MCF 10A (cell line): ENCODE measurements at regions of chr1 and their contacts with region 1.

Region 1: GRCh38 chr1:51235673-51236530 is at the start of gene RNF11:
- DNase-seq: peak; percentile 85
- H3K4me3 Mint-ChIP-seq: peak within 1 kb of the TSS; percentile 80
- H3K27ac Mint-ChIP-seq: peak within 1 kb of the TSS; percentile 70
- H3K4me1 Mint-ChIP-seq: peaks cover 35% of the 10 kb centered on the region
- H3K27me3 Mint-ChIP-seq: no peaks in the 10 kb centered on the region
- CTCF ChIP-seq: no peak
- total RNA-seq, gene RNF11: 73.1 and 86.0 TPM in 2 replicates

Region 2: GRCh38 chr1:50968158-50968820 is 267.6 kb before region 1 on chr1:
- CTCF ChIA-PET with region 1: no interaction called
- POLR2A ChIA-PET with region 1: interaction called, 26 read pairs
- intact Hi-C with region 1: no loop called
- DNase-seq: peak; percentile 91
- H3K4me3 Mint-ChIP-seq: peak overlapping the region; percentile 86
- H3K27ac Mint-ChIP-seq: peak overlapping the region; percentile 95
- H3K4me1 Mint-ChIP-seq: peaks cover 8% of the 10 kb centered on the region
- H3K27me3 Mint-ChIP-seq: no peaks in the 10 kb centered on the region
- CTCF ChIP-seq: peak; percentile 42

Region 3: DNA sequence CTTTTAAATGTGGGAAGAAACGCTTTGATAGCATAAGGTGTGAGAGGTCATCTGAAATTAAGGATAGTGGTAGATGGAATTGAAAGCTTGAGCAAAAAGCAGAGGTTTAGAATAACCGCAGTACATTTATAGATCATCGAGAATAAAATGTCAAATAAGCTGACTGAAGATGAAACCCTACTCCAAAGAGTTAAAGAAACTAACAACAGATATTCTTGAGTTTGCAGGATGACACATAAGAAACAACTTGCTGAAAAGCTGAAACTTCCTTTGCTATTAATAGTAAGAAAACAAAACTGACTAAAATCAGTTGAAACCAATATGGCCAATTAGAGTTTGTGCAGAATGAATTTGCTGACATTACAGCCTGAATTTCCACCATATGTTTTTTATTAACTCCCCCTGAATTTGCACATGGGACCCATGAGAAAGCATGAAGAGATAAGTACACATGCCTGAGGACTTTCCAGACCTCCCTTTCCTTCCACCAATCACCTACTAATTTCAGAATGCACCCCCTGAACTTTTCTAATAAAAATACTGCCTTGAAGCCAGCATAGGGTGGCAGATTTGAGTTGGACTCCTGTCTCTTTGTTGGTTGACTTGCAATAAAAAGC is 135.5 kb before region 1 on chr1:
- CTCF ChIA-PET with region 1: no interaction called
- POLR2A ChIA-PET with region 1: no interaction called
- intact Hi-C with region 1: no loop called
- DNase-seq: no peak
- H3K4me3 Mint-ChIP-seq: no peak overlapping the region
- H3K27ac Mint-ChIP-seq: no peak overlapping the region
- H3K4me1 Mint-ChIP-seq: no peaks in the 10 kb centered on the region
- H3K27me3 Mint-ChIP-seq: no peaks in the 10 kb centered on the region
- CTCF ChIP-seq: no peak

Region 4: GRCh38 chr1:51131185-51131584 is 104.7 kb before region 1 on chr1:
- CTCF ChIA-PET with region 1: no interaction called
- POLR2A ChIA-PET with region 1: no interaction called
- intact Hi-C with region 1: no loop called
- DNase-seq: no peak
- H3K4me3 Mint-ChIP-seq: no peak overlapping the region
- H3K27ac Mint-ChIP-seq: no peak overlapping the region
- H3K4me1 Mint-ChIP-seq: no peaks in the 10 kb centered on the region
- H3K27me3 Mint-ChIP-seq: no peaks in the 10 kb centered on the region
- CTCF ChIP-seq: no peak

Region 5: GRCh38 chr1:51214615-51215131 is 21.2 kb before region 1 on chr1:
- CTCF ChIA-PET with region 1: interaction called, 3 read pairs
- POLR2A ChIA-PET with region 1: interaction called, 12 read pairs
- intact Hi-C with region 1: no loop called
- DNase-seq: peak; percentile 35
- H3K4me3 Mint-ChIP-seq: no peak overlapping the region
- H3K27ac Mint-ChIP-seq: no peak overlapping the region
- H3K4me1 Mint-ChIP-seq: no peaks in the 10 kb centered on the region
- H3K27me3 Mint-ChIP-seq: no peaks in the 10 kb centered on the region
- CTCF ChIP-seq: no peak

Region 6: GRCh38 chr1:51247022-51247421 is 11.1 kb after region 1 on chr1:
- CTCF ChIA-PET with region 1: interaction called, 3 read pairs
- POLR2A ChIA-PET with region 1: interaction called, 33 read pairs
- intact Hi-C with region 1: no loop called
- DNase-seq: no peak
- H3K4me3 Mint-ChIP-seq: no peak overlapping the region
- H3K27ac Mint-ChIP-seq: no peak overlapping the region
- H3K4me1 Mint-ChIP-seq: peaks cover 32% of the 10 kb centered on the region
- H3K27me3 Mint-ChIP-seq: no peaks in the 10 kb centered on the region
- CTCF ChIP-seq: no peak

Region 7: GRCh38 chr1:51264451-51264850 is 28.5 kb after region 1 on chr1:
- CTCF ChIA-PET with region 1: no interaction called
- POLR2A ChIA-PET with region 1: interaction called, 63 read pairs
- intact Hi-C with region 1: no loop called
- DNase-seq: peak; percentile 63
- H3K4me3 Mint-ChIP-seq: no peak overlapping the region
- H3K27ac Mint-ChIP-seq: peak overlapping the region; percentile 37
- H3K4me1 Mint-ChIP-seq: peaks cover 57% of the 10 kb centered on the region
- H3K27me3 Mint-ChIP-seq: no peaks in the 10 kb centered on the region
- CTCF ChIP-seq: no peak

Region 8: GRCh38 chr1:51285055-51285454 is 49.2 kb after region 1 on chr1:
- CTCF ChIA-PET with region 1: interaction called, 3 read pairs
- POLR2A ChIA-PET with region 1: interaction called, 12 read pairs
- intact Hi-C with region 1: loop called (anchors 10 kb)
- DNase-seq: no peak
- H3K4me3 Mint-ChIP-seq: no peak overlapping the region
- H3K27ac Mint-ChIP-seq: no peak overlapping the region
- H3K4me1 Mint-ChIP-seq: peaks cover 7% of the 10 kb centered on the region
- H3K27me3 Mint-ChIP-seq: no peaks in the 10 kb centered on the region
- CTCF ChIP-seq: no peak